Caco-2 (cell line): ENCODE measurements at regions of chr19 and their contacts with region 1.

Region 1: GRCh38 chr19:38666663-38667511 is 19.4 kb downstream of the ACTN4 start:
- DNase-seq: no peak
- H3K4me3 ChIP-seq: no peak overlapping the region
- H3K4me3 Mint-ChIP-seq: peak overlapping the region; percentile 69
- H3K27ac Mint-ChIP-seq: peak overlapping the region; percentile 88
- H3K4me1 ChIP-seq: peaks cover 100% of the 10 kb centered on the region
- H3K4me1 Mint-ChIP-seq: peaks cover 86% of the 10 kb centered on the region
- H3K27me3 ChIP-seq: no peaks in the 10 kb centered on the region
- H3K27me3 Mint-ChIP-seq: no peaks in the 10 kb centered on the region
- CTCF ChIP-seq: no peak

Region 2: DNA sequence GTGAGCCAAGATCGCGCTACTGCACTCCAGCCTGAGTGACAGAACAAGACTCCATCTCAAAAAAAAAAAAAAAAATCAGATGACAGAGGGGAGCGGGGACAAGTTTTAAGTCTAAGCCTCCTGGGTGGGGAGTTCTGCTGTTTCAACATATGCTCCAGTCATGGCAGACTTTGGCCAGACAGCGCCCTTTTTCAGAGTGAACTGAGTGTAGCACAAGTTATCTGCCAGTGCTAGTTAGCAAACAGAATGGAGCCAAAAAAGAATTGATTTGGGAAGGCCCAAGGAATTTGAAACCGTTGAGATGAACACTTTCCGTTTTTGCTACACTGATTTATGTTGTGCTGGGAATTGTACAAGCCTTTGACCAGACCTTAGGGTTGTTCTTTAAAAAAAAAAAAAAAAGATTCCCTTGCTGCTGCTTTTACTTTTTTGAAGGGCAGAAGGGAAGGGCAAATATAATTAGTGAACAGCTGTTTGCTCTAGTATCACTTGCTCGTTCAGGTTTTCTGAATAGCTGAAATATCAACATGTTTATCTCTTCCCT is 13.8 kb before region 1 on chr19:
- CTCF ChIA-PET with region 1: interaction called, 3 read pairs
- POLR2A ChIA-PET with region 1: interaction called, 11 read pairs
- intact Hi-C with region 1: loop called (anchors 2 kb)
- DNase-seq: peak; percentile 73 to 81
- H3K4me3 ChIP-seq: no peak overlapping the region; the same call in 1 of the 2 replicates
- H3K4me3 Mint-ChIP-seq: peak overlapping the region; percentile 59
- H3K27ac Mint-ChIP-seq: peak overlapping the region; percentile 84
- H3K4me1 ChIP-seq: peaks cover 87% of the 10 kb centered on the region
- H3K4me1 Mint-ChIP-seq: peaks cover 62% of the 10 kb centered on the region
- H3K27me3 ChIP-seq: no peaks in the 10 kb centered on the region
- H3K27me3 Mint-ChIP-seq: no peaks in the 10 kb centered on the region
- CTCF ChIP-seq: no peak